H1 (cell line): ENCODE measurements at regions of chr6 and their contacts with region 1.

Region 1: DNA sequence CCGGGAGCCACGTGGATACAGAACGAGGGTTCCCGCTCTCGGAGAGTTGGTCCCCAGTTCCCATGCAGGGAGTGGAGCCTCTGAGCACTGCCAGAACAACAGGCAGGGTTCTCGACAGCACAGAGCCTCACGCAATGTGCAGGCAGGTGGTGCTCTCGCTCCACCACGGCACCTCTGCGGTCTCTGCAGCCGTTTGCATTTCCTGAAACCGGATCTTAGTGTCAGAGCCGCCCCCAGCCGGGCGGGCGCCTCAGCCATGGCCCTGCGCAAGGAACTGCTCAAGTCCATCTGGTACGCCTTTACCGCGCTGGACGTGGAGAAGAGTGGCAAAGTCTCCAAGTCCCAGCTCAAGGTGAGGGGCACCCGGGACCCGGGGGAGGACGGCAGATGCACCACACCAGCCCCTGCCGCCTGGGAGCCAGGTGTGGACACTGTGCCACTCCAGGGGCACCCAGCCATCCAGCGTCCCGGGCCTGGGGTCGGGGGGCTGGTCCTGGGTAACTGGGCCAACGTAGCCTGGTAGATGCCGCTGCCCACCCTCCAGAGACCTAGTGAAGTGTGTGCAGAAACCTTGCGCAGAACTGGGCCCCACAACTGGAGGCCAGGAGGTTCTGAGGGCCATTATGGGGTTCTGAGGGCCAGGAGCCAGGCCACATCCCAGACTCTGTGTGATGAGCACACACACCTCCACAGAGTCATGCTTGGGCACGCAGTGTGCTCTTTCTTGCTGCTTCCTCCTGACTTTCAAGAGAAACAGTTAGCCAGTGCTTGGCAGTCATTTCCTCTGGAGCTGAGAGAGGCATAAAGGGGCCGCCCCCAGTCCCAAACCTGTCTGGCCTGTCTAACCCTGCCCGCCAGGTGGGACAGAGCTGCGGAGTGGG is at the start of gene DEF6:
- DNase-seq: peak; percentile 83 to 85
- H3K4me3 ChIP-seq: peak within 1 kb of the TSS in 1 of 4 experiments; percentile 49; a peak in 2 of 8 replicates
- H3K27ac ChIP-seq: no peak within 1 kb of the TSS
- H3K4me1 ChIP-seq: peaks cover 4 to 14% (median 11%) of the 10 kb centered on the region in 4 experiments
- H3K27me3 ChIP-seq: no peaks in the 10 kb centered on the region
- CTCF ChIP-seq: peak; percentile 95 to 98 (median 97)
- EP300 ChIP-seq: no peak; a peak in 1 of 3 replicates
- POLR2A ChIP-seq: 0 out of 3 replicates have a peak, but pooled peaks of 1 of the 2 experiments have one; percentile 14
- RAD21 ChIP-seq: peak; percentile 99 to 100
- total RNA-seq, gene DEF6: 4.1 and 4.5 TPM in 2 replicates

Region 2: DNA sequence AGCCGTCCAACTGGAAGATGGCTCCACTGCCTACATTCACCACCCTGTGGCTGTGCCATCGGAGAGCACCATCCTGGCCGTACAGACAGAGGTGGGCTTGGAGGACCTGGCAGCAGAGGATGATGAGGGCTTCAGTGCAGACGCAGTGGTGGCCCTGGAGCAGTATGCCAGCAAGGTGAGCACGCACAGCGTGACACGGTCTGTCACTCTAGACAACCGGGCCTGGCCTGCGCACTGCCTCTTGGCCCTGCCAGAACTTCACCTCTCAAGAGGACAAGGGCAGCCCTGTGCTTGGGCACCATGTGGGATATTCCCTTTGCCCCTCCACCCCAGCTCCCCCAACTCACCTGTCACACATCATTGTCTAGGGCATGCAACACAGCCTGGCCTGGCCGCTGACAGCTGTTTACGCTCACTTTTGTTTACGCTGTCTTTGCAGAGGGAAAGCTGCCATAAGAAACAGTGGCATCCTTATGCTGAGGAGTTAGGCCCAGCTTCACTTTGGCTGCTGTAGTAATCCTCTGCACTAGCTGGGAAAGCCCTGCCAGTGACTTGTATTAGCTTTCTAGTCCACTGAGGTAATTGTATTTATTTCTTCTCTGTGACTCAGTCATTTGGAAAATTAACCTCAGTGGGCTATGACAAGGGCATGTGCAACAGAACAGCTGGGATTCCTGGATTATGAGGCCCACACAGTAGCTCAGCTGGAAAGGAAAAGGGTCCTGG is 10.0 kb before region 1 on chr6:
- CTCF ChIA-PET with region 1: interaction called, 17 read pairs
- POLR2A ChIA-PET with region 1: interaction called, 8 read pairs
- DNase-seq: no peak
- H3K4me3 ChIP-seq: no peak overlapping the region
- H3K27ac ChIP-seq: no peak overlapping the region
- H3K4me1 ChIP-seq: no peaks in the 10 kb centered on the region
- H3K27me3 ChIP-seq: no peaks in the 10 kb centered on the region
- CTCF ChIP-seq: no peak
- EP300 ChIP-seq: no peak
- POLR2A ChIP-seq: no peak
- RAD21 ChIP-seq: no peak

Region 3: GRCh38 chr6:35327349-35328027 is 29.6 kb after region 1 on chr6:
- CTCF ChIA-PET with region 1: interaction called, 358 read pairs
- POLR2A ChIA-PET with region 1: interaction called, 4 read pairs
- DNase-seq: peak in 1 of 2 experiments; percentile 79
- H3K4me3 ChIP-seq: no peak overlapping the region
- H3K27ac ChIP-seq: no peak overlapping the region
- H3K4me1 ChIP-seq: 0 out of 7 replicates have a peak, but pooled peaks cover 0 to under 1% (median 0%) of the 10 kb centered on the region in 4 experiments
- H3K27me3 ChIP-seq: no peaks in the 10 kb centered on the region
- CTCF ChIP-seq: peak; percentile 51 to 84 (median 74)
- EP300 ChIP-seq: no peak
- POLR2A ChIP-seq: no peak
- RAD21 ChIP-seq: peak; percentile 62 to 76

Region 4: DNA sequence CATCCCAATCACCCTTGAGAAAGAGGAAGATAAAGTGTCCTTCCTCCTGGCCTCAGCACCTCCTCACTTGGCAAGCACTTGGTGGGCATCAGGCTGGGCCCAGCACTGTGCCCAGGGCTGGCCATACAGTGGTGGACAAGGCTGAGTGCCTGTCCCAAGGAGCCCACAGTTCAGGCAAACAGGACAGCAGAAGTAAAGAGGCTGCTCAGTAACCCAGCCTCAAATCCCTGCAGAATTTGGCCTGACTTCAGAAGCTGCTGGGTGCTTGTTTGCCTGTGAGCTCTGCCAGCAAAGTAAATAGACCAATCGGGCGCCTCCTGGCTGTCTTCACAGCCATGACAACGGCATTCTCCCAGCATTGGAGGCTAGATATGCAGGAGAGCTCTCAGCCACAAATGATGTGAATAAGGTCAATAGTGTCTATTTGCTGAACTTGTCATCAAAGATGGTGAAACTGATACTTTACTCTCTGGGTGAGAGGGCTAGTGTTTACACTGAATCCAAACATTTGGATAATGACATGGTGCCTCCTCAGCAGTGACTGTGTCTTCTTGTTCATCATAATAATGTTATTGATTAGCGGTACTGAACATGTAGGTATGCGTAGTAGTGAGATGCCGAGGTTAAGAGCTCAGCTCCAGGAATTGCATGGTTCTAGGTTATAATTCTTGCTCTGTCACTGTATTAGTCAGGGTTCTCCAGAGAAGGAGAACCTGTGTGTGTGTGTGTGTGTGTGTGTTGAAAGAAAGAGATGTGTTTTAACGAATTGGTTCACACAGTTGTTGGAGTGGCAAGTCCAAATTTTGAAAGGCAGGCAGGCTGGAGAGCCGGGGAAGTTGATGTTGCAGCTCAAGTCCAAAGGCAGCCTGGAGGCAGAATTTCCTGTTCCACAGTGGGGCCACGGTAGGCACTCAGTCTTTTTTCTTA is 117.5 kb after region 1 on chr6:
- CTCF ChIA-PET with region 1: interaction called, 63 read pairs
- POLR2A ChIA-PET with region 1: no interaction called
- DNase-seq: no peak
- H3K4me3 ChIP-seq: no peak overlapping the region
- H3K27ac ChIP-seq: no peak overlapping the region
- H3K4me1 ChIP-seq: peaks cover 0 to 9% (median 1%) of the 10 kb centered on the region in 4 experiments; a peak in 4 of 7 replicates
- H3K27me3 ChIP-seq: no peaks in the 10 kb centered on the region
- CTCF ChIP-seq: peak; percentile 70 to 80 (median 78)
- EP300 ChIP-seq: no peak
- POLR2A ChIP-seq: no peak
- RAD21 ChIP-seq: peak; percentile 65 to 77

Region 5: GRCh38 chr6:35468181-35468979 is 170.5 kb after region 1 on chr6 and contains the start of gene RPL10A:
- CTCF ChIA-PET with region 1: interaction called, 30 read pairs
- POLR2A ChIA-PET with region 1: interaction called, 40 read pairs
- DNase-seq: peak; percentile 82 to 96
- H3K4me3 ChIP-seq: peak within 1 kb of the TSS; percentile 86 to 99 (median 92)
- H3K27ac ChIP-seq: peak within 1 kb of the TSS; percentile 94
- H3K4me1 ChIP-seq: peaks cover 0 to 8% (median 5%) of the 10 kb centered on the region in 4 experiments; a peak in 6 of 7 replicates
- H3K27me3 ChIP-seq: no peaks in the 10 kb centered on the region; a peak in 1 of 7 replicates
- CTCF ChIP-seq: peak in 2 of 3 experiments; percentile 90 to 97; a peak in 3 of 4 replicates
- EP300 ChIP-seq: no peak
- POLR2A ChIP-seq: peak in 1 of 2 experiments; percentile 100; a peak in 2 of 3 replicates
- RAD21 ChIP-seq: peak; percentile 78 to 85
- total RNA-seq, gene RPL10A: 1,893 and 1,923 TPM in 2 replicates